Cardiac septum (tissue), 1 donor: ENCODE measurements at regions of chr22 and their contacts with region 1.

Region 1: GRCh38 chr22:24005201-24005600 is at the start of gene GSTT4:
- DNase-seq: peak; percentile 88
- total RNA-seq, gene GSTT4: not detected

Region 2: DNA sequence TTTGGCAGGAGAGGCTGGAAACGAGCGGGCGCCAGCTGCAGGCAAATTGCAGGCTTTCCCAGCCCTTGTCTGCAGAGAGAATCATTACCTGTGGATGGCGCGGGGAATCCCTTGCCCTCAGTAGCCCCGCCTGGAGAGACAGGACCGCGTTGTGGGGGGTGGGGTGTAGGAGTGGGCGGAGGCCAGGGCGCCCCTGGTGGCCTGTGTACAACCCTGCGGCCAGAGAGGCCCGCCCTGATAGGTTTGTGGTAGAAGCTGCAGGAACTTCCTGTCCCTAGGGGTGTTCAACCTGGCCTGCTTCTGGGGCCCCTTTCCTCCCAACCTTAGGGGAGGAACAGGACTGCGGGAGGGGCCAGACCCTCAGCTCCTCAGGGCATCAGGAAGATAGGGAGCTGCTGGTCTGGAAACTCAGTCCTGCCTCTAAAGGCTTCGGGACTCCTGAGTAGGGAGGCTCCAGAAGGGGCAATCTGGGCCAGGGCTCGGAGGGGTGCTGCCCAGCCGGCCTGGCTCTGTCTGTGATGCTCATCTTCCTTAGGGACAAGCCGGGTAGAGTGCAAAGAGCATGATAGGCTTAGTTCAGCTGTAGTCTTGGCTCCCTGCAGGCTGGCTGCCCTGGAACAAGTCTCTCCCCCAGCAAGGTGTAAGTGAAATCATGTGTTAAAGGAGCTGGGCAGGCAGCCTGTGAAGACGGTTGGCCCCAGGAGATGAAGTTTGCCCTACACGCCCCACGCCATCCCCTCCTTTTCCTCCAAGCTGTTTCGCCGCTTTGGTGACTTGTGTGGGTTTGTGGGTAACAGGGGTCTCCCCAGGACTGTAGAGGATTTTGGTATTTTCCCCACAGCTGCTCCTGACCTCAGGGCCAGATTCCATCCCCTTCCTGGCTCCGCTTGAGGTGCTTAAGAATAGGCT is 152.0 kb after region 1 on chr22:
- intact Hi-C with region 1: loop called (anchors 5 kb)
- DNase-seq: peak; percentile 95

Region 3: GRCh38 chr22:24175160-24175808 is 170.1 kb after region 1 on chr22:
- intact Hi-C with region 1: loop called (anchors 5 kb)
- DNase-seq: peak; percentile 92

Region 4: DNA sequence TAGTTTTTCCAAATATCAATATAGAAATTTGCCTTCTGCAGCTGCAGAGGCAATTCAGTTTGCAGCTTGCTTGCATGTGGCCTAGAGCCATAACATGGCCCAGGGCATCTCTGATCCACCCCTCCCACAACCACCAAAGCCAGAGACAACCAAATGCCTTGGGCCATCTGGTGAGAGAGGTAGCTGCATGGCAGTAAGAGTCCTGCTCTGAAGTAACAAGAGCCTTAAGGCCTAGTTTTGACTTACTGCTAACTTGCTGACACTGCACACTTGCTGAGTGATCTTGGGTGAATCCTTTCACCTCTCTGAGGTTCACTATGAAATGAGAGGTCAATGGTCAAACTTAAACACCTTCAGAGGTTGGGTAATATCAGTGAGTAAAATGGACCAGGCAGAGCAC is 260.5 kb after region 1 on chr22:
- intact Hi-C with region 1: loop called (anchors 10 kb)
- DNase-seq: no peak